Heart left ventricle (tissue), 16 donors: ENCODE measurements at regions of chr6 and their contacts with region 1.

Region 1: DNA sequence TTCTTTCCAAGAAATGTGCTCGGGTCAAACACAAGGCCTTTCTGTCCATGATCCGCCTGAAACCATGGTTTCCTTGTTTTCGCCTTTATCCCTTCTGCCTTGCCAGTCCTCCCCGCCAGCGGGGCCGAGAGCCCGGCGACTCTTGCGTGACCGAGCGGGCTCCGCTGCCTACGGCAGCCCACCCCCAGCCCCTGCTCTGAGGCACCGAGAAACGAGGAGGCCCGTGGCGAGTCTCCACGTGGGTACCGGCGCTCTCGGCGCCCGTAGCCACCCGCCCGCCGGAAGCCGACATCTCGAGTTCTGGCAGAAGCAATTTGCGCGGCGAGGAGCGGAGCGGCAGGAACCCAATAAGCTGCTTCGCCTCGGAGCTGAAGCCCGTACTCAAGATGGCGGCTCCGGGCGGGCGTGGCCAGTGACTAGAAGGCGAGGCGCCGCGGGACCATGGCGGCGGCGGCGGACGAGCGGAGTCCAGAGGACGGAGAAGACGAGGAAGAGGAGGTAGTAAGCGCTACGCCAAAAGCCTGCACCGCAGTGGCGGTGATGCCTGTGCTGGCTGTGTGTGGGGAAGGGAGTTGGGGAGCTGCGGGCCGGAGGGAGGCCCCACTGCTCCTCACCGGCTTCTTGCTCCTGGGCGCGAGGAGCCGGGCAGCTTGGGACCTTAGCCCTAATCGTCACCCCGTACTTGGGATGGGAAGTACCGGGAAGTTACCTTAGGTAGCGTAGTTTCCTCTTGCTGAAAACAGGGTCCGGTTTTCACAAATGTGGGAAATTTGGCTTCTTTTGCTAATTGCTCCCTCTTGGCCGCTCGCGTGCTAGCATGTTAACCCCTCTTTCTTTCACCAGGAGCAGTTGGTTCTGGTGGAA is at the start of gene GTF3C6:
- DNase-seq: peak; percentile 94 to 97 (median 96)
- ATAC-seq: peak; percentile 97 to 99 (median 99)
- H3K4me3 ChIP-seq: peak within 1 kb of the TSS; percentile 60 to 97 (median 82)
- H3K27ac ChIP-seq: peak within 1 kb of the TSS; percentile 67 to 96 (median 91)
- H3K4me1 ChIP-seq: peaks cover 0 to 23% (median 11%) of the 10 kb centered on the region in 12 donors
- H3K27me3 ChIP-seq: no peaks in the 10 kb centered on the region
- CTCF ChIP-seq: peak in 2 of 12 donors; percentile 6 to 14
- POLR2A ChIP-seq: peak in 1 of 2 donors; percentile 66
- total RNA-seq, gene GTF3C6: 55.4 to 133 (median 104) TPM

Region 2: DNA sequence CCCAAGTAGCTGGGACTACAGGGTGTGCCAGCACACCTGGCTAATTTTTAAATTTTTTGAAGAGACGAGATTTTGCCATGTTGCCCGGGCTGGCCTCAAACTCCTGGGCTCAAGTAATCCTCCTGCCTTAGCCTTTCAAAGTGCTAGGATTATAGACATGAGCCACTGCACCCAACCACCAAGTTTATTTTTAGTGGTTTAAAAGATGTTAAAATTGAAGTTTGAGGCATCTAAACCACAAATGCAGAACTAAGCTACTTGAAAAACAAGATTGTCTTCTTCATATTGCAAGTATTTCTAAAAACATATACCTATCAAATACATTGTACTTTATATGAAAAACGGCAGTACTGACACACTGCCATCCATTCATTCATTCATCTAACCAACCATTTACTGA is 810.7 kb before region 1 on chr6:
- intact Hi-C with region 1: no loop called
- DNase-seq: no peak
- ATAC-seq: no peak
- H3K4me3 ChIP-seq: no peak overlapping the region
- H3K27ac ChIP-seq: no peak overlapping the region
- H3K4me1 ChIP-seq: no peaks in the 10 kb centered on the region
- H3K27me3 ChIP-seq: no peaks in the 10 kb centered on the region
- CTCF ChIP-seq: no peak
- POLR2A ChIP-seq: no peak

Region 3: DNA sequence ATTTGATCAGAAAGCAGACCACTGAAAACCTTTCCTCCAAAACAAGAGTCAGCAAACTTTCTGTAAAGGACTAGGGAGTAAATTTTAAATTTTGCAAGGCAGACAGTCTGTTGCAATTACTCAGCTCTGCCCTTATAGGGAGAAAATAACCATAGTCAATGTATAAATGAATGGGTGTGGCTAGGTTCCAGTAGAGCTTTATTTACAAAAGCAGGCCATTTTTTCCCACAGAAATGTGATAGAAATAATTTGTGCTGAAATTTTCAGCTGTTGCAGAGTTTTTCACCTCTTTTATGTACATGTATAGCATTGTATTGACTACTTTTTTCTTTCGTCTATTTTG is 76.3 kb before region 1 on chr6:
- intact Hi-C with region 1: loop called in 4 of 10 experiments (anchors 5 to 10 kb)
- DNase-seq: no peak
- ATAC-seq: no peak
- H3K4me3 ChIP-seq: peak overlapping the region in 2 of 12 donors; percentile 11 to 18
- H3K27ac ChIP-seq: peak overlapping the region in 10 of 12 donors; percentile 4 to 65 (median 51)
- H3K4me1 ChIP-seq: peaks cover 2 to 96% (median 68%) of the 10 kb centered on the region in 12 donors
- H3K27me3 ChIP-seq: no peaks in the 10 kb centered on the region
- CTCF ChIP-seq: no peak
- POLR2A ChIP-seq: no peak

Region 4: DNA sequence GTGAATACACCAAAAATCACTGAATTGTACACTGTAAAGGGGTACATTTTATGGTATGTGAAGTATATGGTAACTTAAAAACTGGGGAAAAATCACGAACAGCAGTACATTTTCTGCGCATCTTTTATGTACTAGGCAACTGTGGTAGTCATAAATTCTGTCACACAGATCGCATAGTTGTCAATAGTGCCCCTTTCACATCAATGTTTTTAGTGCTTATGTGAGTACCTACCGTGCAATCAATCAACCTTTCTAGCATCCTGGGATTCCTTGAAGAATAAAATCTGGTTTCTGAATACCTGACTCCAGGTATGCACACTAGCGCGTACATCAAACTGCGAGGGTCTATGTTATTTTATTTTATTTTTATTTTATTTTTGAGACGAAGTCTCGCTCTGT is 22.6 kb after region 1 on chr6:
- intact Hi-C with region 1: loop called in 2 of 10 experiments (anchors 2 kb)
- DNase-seq: no peak
- ATAC-seq: peak in 2 of 4 donors; percentile 2 to 4
- H3K4me3 ChIP-seq: peak overlapping the region; percentile 49 to 89 (median 78)
- H3K27ac ChIP-seq: peak overlapping the region; percentile 45 to 97 (median 90)
- H3K4me1 ChIP-seq: peaks cover 0 to 21% (median 11%) of the 10 kb centered on the region in 12 donors
- H3K27me3 ChIP-seq: no peaks in the 10 kb centered on the region
- CTCF ChIP-seq: no peak
- POLR2A ChIP-seq: no peak